ENCODE measurements at regions of chr13 and their contacts with region 1.

Region 1: DNA sequence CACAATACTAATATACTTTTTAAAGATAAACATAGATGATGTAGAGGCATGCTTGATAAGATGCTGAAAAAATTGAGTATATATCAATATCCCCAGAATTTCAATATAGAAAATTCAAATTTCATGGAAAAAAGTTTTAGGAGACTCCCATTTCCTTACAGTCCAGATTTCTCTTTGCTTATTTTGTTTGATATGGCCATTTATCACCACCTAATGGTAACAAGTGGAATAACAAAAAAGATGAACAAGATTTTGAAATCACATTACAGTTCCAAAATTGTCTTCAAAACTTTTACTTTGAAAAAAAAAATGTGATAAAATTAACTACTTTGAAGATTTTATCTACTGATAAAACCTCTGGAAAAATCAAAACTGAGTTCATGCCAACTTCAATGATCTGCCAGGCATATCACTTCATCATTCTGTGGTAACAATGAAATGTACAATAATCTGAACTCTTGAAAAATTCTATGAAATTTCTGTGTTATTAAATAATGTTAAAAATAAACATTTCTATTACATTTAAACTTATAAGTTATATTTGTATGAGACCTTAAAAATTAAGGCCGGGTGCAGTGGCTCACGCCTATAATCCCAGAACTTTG is 17.5 kb downstream of the MIPEP start:
- DNase-seq: peak; percentile 44
- ATAC-seq: no peak
- H3K4me3 ChIP-seq: no peak overlapping the region
- H3K4me3 Mint-ChIP-seq: no peak overlapping the region
- H3K27ac ChIP-seq: no peak overlapping the region
- H3K27ac Mint-ChIP-seq: no peak overlapping the region
- H3K4me1 ChIP-seq: peaks cover 10 to 12% of the 10 kb centered on the region in 2 donors
- H3K4me1 Mint-ChIP-seq: peaks cover 13% of the 10 kb centered on the region
- H3K27me3 ChIP-seq: no peaks in the 10 kb centered on the region
- H3K27me3 Mint-ChIP-seq: no peaks in the 10 kb centered on the region
- CTCF ChIP-seq: peak; percentile 90

Region 2: DNA sequence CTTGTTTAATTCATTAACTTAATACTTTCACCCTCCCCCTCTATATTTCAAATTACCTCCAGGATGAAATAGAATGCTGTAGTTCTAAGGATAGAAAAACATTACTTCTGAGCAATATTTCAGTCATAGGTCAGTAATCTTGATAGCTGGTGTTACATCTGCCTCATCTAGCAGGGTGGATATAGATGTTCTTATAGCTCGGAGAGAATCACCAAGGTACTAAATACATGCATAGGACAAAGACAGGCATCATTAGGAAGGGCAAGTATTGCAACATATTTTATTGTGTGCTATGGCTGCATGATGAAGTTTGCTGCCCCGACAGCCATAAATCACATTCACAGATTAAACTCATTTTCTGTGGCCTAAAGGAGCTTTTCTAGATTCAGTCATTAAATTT is 1599.8 kb before region 1 on chr13:
- CTCF ChIA-PET with region 1: no interaction called
- POLR2A ChIA-PET with region 1: no interaction called
- intact Hi-C with region 1: no loop called
- DNase-seq: no peak
- ATAC-seq: no peak
- H3K4me3 ChIP-seq: no peak overlapping the region
- H3K4me3 Mint-ChIP-seq: no peak overlapping the region
- H3K27ac ChIP-seq: no peak overlapping the region
- H3K27ac Mint-ChIP-seq: no peak overlapping the region
- H3K4me1 ChIP-seq: no peaks in the 10 kb centered on the region
- H3K4me1 Mint-ChIP-seq: no peaks in the 10 kb centered on the region
- H3K27me3 ChIP-seq: no peaks in the 10 kb centered on the region
- H3K27me3 Mint-ChIP-seq: no peaks in the 10 kb centered on the region
- CTCF ChIP-seq: no peak

Region 3: DNA sequence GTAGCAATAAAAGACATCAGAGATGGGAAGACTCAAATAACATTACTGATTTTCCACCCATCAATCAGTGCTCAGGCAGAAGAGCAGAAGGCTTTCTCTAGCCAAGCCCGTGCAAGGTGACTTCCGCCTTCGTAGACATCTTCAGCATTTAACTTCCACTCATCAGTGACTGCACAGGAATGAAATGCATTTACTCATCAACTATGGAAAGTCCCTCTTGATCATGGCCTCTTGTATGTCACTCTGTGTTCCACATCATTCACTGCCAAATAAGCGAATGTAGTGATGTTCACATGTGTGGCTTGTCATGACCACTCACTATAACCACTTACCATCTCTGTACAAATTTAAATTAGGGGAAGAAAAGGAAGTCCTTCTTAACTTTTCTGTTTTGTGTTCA is 487.6 kb before region 1 on chr13:
- CTCF ChIA-PET with region 1: no interaction called
- POLR2A ChIA-PET with region 1: no interaction called
- intact Hi-C with region 1: loop called (anchors 1 kb)
- DNase-seq: peak; percentile 92
- ATAC-seq: peak; percentile 98
- H3K4me3 ChIP-seq: no peak overlapping the region
- H3K4me3 Mint-ChIP-seq: peak overlapping the region; percentile 40
- H3K27ac ChIP-seq: peak overlapping the region; percentile 37 to 68
- H3K27ac Mint-ChIP-seq: peak overlapping the region; percentile 76
- H3K4me1 ChIP-seq: peaks cover 30% of the 10 kb centered on the region in 2 donors
- H3K4me1 Mint-ChIP-seq: peaks cover 31% of the 10 kb centered on the region
- H3K27me3 ChIP-seq: peaks cover 0 to 4% (median 0%) of the 10 kb centered on the region in 4 experiments
- H3K27me3 Mint-ChIP-seq: peaks cover 4% of the 10 kb centered on the region
- CTCF ChIP-seq: no peak

Region 4: GRCh38 chr13:23466144-23467002 is 405.3 kb before region 1 on chr13:
- CTCF ChIA-PET with region 1: interaction called, 15 read pairs
- POLR2A ChIA-PET with region 1: no interaction called
- intact Hi-C with region 1: loop called (anchors 1 kb)
- DNase-seq: peak; percentile 77
- ATAC-seq: peak; percentile 89
- H3K4me3 ChIP-seq: peak overlapping the region; percentile 42 to 70 (median 53)
- H3K4me3 Mint-ChIP-seq: peak overlapping the region; percentile 87
- H3K27ac ChIP-seq: no peak overlapping the region
- H3K27ac Mint-ChIP-seq: peak overlapping the region; percentile 46
- H3K4me1 ChIP-seq: peaks cover 4 to 12% of the 10 kb centered on the region in 2 donors
- H3K4me1 Mint-ChIP-seq: peaks cover 8% of the 10 kb centered on the region
- H3K27me3 ChIP-seq: peaks cover 0 to 27% (median 9%) of the 10 kb centered on the region in 4 experiments
- H3K27me3 Mint-ChIP-seq: peaks cover 58% of the 10 kb centered on the region
- CTCF ChIP-seq: peak; percentile 68

Region 5: DNA sequence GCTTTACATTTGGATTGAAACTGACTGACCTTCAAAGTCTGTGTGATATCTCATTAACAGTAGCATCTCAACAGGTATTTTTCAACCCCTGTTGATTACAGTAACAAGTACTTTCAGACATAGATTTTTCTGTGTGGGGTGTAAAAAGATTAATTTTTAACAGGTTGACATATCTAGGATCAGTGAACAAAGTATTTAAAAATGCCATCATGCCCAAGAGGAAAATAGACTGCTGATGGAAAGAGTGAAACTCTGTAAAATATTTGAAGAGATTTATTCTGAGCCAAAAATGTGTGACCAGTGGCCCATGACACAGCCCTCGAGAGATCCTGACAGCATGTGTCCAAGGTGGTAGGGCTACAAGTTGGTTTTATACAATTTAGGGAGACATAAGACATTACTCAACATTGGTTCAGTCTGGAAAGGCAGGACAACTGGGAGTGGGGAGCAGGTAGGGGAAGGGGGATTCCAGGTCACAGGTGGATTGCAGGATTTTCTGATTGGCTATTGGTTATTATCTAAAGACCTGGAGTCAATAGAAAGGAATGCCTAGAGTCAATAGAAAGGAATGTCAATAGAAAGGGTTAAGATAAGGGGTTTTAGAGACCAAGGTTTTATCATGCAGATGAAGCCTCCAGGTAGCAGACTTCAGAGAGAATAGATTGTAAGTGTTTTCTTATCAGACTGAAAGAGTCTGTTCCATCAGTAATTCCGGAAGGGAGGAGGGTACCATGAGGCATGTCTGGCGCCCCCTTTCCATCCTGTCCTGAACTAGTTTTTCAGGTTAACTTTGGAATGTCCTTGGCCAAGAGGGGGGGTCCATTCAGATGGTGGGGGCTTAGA is 272.4 kb before region 1 on chr13:
- CTCF ChIA-PET with region 1: interaction called, 3 read pairs
- POLR2A ChIA-PET with region 1: no interaction called
- intact Hi-C with region 1: loop called (anchors 1 kb)
- DNase-seq: no peak
- ATAC-seq: no peak
- H3K4me3 ChIP-seq: no peak overlapping the region
- H3K4me3 Mint-ChIP-seq: no peak overlapping the region
- H3K27ac ChIP-seq: no peak overlapping the region
- H3K27ac Mint-ChIP-seq: no peak overlapping the region
- H3K4me1 ChIP-seq: no peaks in the 10 kb centered on the region
- H3K4me1 Mint-ChIP-seq: no peaks in the 10 kb centered on the region
- H3K27me3 ChIP-seq: peaks cover 0 to 15% (median 6%) of the 10 kb centered on the region in 4 experiments
- H3K27me3 Mint-ChIP-seq: peaks cover 44% of the 10 kb centered on the region
- CTCF ChIP-seq: no peak

Region 6: GRCh38 chr13:23695711-23696464 is 175.8 kb before region 1 on chr13:
- CTCF ChIA-PET with region 1: no interaction called
- POLR2A ChIA-PET with region 1: no interaction called
- intact Hi-C with region 1: loop called (anchors 5 kb)
- DNase-seq: peak; percentile 77
- ATAC-seq: peak; percentile 96
- H3K4me3 ChIP-seq: peak overlapping the region in 4 of 5 experiments; percentile 24 to 53 (median 45)
- H3K4me3 Mint-ChIP-seq: peak overlapping the region; percentile 89
- H3K27ac ChIP-seq: peak overlapping the region; percentile 78 to 83
- H3K27ac Mint-ChIP-seq: peak overlapping the region; percentile 98
- H3K4me1 ChIP-seq: peaks cover 9 to 21% of the 10 kb centered on the region in 2 donors
- H3K4me1 Mint-ChIP-seq: peaks cover 19% of the 10 kb centered on the region
- H3K27me3 ChIP-seq: no peaks in the 10 kb centered on the region
- H3K27me3 Mint-ChIP-seq: no peaks in the 10 kb centered on the region
- CTCF ChIP-seq: no peak

Region 7: GRCh38 chr13:23888658-23889614 is 17.2 kb after region 1 on chr13 and contains the start of gene MIPEP:
- CTCF ChIA-PET with region 1: interaction called, 5 read pairs
- POLR2A ChIA-PET with region 1: no interaction called
- intact Hi-C with region 1: loop called (anchors 1 kb)
- DNase-seq: peak; percentile 92
- ATAC-seq: peak; percentile 93
- H3K4me3 ChIP-seq: peak within 1 kb of the TSS; percentile 24 to 96 (median 80)
- H3K4me3 Mint-ChIP-seq: peak within 1 kb of the TSS; percentile 94
- H3K27ac ChIP-seq: peak within 1 kb of the TSS; percentile 42 to 86
- H3K27ac Mint-ChIP-seq: peak within 1 kb of the TSS; percentile 95
- H3K4me1 ChIP-seq: peaks cover 12 to 17% of the 10 kb centered on the region in 2 donors
- H3K4me1 Mint-ChIP-seq: peaks cover 23% of the 10 kb centered on the region
- H3K27me3 ChIP-seq: no peaks in the 10 kb centered on the region
- H3K27me3 Mint-ChIP-seq: no peaks in the 10 kb centered on the region
- CTCF ChIP-seq: peak; percentile 69
- total RNA-seq, gene MIPEP: 15.7 and 16.9 TPM in 2 replicates

Measured in B cell (primary cell).